ENCODE measurements at regions of chr2 and their contacts with region 1.

Region 1: DNA sequence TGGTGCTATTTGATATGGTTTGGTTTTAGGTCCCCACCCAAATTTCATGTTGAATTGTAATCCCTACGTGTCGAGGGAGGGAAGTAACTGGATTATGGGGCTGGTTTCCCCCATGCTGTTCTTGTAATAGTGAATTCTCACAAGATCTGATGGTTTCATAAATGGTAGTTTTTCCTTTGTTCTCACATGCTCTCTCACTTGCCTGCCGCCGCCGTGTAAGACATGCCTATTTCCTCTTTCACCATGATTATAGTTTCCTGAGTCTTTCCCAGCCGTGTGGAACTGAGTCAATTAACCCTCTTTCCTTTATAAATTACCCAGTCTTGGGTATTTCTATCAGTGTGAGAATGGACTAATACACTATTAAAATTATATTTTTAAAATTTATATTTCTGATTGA is 7.3 kb downstream of the DIS3L2 start:
- DNase-seq: no peak
- H3K4me3 ChIP-seq: no peak overlapping the region
- H3K27me3 ChIP-seq: no peaks in the 10 kb centered on the region
- CTCF ChIP-seq: no peak

Region 2: DNA sequence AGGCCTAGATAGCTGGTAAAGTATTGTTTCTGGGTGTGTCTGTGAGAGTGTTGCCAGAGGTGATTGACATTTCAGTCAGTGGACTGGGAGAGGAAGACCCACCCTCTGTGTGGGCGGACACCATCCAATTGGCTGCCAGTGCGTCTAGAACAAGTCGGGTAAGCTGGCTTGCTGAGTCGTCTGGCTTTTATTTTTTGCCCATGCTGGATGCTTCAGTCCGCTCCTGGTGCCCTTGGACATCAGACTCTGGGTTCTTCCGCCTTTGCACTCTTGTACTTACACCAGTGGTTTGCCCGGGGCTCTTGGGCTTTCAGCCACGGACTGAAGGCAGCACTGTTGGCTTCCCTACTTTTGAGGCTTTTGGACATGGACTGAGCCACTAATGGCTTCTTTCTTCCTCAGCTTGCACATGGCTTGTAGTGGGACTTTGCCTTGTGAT is 17.0 kb after region 1 on chr2:
- CTCF ChIA-PET with region 1: interaction called, 4 read pairs
- POLR2A ChIA-PET with region 1: interaction called, 13 read pairs
- DNase-seq: no peak
- H3K4me3 ChIP-seq: no peak overlapping the region
- H3K27me3 ChIP-seq: no peaks in the 10 kb centered on the region
- CTCF ChIP-seq: no peak

Measured in BJ (cell line).